Adrenal gland (tissue), 19 donors: ENCODE measurements at regions of chr19 and their contacts with region 1.

Region 1: GRCh38 chr19:17579661-17580244 is 24.3 kb downstream of the COLGALT1 start:
- DNase-seq: peak in 6 of 7 donors; percentile 34 to 65 (median 48)
- H3K4me3 ChIP-seq: no peak overlapping the region
- H3K27ac ChIP-seq: peak overlapping the region in 1 of 5 donors; percentile 10
- H3K4me1 ChIP-seq: no peaks in the 10 kb centered on the region
- H3K27me3 ChIP-seq: no peaks in the 10 kb centered on the region
- CTCF ChIP-seq: no peak
- POLR2A ChIP-seq: no peak

Region 2: DNA sequence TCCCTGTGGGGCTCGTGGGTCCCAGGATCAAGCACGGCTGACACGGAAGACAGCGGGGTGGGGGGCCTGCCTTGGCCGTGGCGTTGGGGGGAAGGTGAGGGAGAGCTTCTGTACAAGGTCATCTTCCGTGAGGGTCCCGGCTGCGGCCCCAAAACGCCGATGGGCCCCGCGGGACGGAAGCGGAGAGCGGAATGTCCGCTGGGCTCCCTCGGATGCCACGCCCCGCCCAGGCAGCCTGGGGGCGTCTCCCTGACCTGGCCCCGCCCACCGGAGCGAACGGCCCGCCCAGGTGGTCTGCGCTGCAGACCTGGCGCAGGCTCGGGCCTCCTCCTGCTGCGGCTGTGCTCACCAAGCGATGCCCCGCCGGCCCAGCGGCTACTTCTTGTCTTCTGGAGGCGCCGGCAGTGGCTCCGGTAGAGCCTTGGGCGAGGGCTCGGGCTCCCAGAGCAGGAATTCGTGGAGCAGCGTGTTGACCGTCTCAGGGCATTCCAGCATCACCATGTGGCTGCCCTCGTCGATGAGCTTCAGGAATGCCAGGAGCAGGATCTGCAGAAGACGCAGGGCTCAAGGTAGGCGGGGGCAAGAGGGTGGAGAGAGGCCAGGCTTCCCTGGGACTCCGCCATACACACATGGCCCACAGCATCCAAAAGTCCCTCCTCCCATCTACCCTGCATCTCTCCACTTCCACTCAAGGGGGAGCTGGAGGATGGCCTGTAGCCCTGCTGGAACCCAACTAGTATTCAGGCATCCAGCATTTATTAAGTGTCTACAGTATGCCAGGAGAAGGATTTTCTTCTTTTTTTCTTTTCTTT is 287.3 kb before region 1 on chr19:
- intact Hi-C with region 1: no loop called
- DNase-seq: peak; percentile 67 to 85 (median 76)
- H3K4me3 ChIP-seq: peak overlapping the region in 2 of 4 donors; percentile 10 to 54
- H3K27ac ChIP-seq: peak overlapping the region in 4 of 5 donors; percentile 3 to 84 (median 49)
- H3K4me1 ChIP-seq: peaks cover 7 to 24% of the 10 kb centered on the region in 2 donors
- H3K27me3 ChIP-seq: no peaks in the 10 kb centered on the region
- CTCF ChIP-seq: peak; percentile 13 to 89 (median 67)
- POLR2A ChIP-seq: no peak

Region 3: GRCh38 chr19:17496337-17496997 is 83.3 kb before region 1 on chr19:
- intact Hi-C with region 1: loop called (anchors 10 kb)
- DNase-seq: peak; percentile 61 to 82 (median 80)
- H3K4me3 ChIP-seq: no peak overlapping the region
- H3K27ac ChIP-seq: peak overlapping the region in 2 of 5 donors; percentile 12 to 17
- H3K4me1 ChIP-seq: peaks cover 8 to 30% of the 10 kb centered on the region in 2 donors
- H3K27me3 ChIP-seq: no peaks in the 10 kb centered on the region
- CTCF ChIP-seq: peak; percentile 78 to 94 (median 90)
- POLR2A ChIP-seq: no peak

Region 4: GRCh38 chr19:17641181-17641580 is 61.4 kb after region 1 on chr19:
- intact Hi-C with region 1: no loop called
- DNase-seq: no peak
- H3K4me3 ChIP-seq: no peak overlapping the region
- H3K27ac ChIP-seq: no peak overlapping the region
- H3K4me1 ChIP-seq: no peaks in the 10 kb centered on the region
- H3K27me3 ChIP-seq: no peaks in the 10 kb centered on the region
- CTCF ChIP-seq: no peak
- POLR2A ChIP-seq: no peak